Activated naive CD4-positive, alpha-beta T cell treated with anti-CD3 and anti-CD28 coated beads, Interleukin-2, amount 10 ng/mL, durations not matched to agents 7 days and 5 days (primary cell): ENCODE measurements at regions of chr10 and their contacts with region 1.

Region 1: GRCh38 chr10:112314822-112315474 is 31.7 kb downstream of the TECTB start:
- DNase-seq: peak; percentile 84
- H3K4me3 Mint-ChIP-seq: no peak overlapping the region
- H3K27ac Mint-ChIP-seq: no peak overlapping the region
- H3K4me1 Mint-ChIP-seq: no peaks in the 10 kb centered on the region
- H3K27me3 Mint-ChIP-seq: peaks cover 25% of the 10 kb centered on the region

Region 2: DNA sequence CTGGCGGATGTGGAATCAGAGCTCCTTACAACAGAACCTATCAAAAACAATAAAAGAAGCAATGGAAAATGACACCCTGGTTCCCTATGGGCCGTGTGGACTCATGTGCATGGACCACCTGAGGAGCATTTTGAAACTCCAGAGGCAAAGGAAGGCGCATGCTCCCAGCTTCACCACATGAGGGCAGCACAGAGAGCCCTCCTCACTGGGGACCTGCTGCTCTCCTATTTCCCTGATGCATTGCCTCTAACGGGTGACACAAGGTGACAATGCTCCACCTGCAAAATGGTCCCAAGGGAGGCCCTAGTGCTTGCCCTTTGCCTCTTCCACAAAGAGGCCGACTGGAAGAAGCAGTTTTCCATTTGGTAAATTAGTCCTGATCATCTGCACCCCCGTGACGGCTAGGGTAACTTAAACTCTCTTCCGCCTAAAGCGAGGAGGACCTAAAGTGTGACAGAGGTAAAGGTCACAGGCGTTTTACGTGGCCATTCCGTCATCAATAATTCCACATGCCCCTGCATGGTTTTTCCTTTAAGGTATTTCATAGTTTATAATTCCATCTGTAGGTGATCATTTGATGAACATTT is 199.1 kb before region 1 on chr10:
- CTCF ChIA-PET with region 1: interaction called, 10 read pairs
- DNase-seq: peak; percentile 63
- H3K4me3 Mint-ChIP-seq: no peak overlapping the region
- H3K27ac Mint-ChIP-seq: no peak overlapping the region
- H3K4me1 Mint-ChIP-seq: no peaks in the 10 kb centered on the region
- H3K27me3 Mint-ChIP-seq: no peaks in the 10 kb centered on the region